Ovary (tissue), 10 donors: ENCODE measurements at regions of chr11 and their contacts with region 1.

Region 1: GRCh38 chr11:117205211-117205818 is 6.1 kb downstream of the TAGLN start:
- DNase-seq: peak in 1 of 5 donors; percentile 60
- H3K4me3 ChIP-seq: peak overlapping the region; percentile 24
- H3K27ac ChIP-seq: peak overlapping the region in 1 of 2 donors; percentile 86
- H3K4me1 ChIP-seq: peaks cover 36% of the 10 kb centered on the region
- H3K27me3 ChIP-seq: no peaks in the 10 kb centered on the region
- CTCF ChIP-seq: no peak
- EP300 ChIP-seq: no peak
- POLR2A ChIP-seq: no peak

Region 2: GRCh38 chr11:117134431-117134830 is 70.9 kb before region 1 on chr11:
- intact Hi-C with region 1: loop called in 3 of 4 experiments (anchors 5 kb)
- DNase-seq: no peak
- H3K4me3 ChIP-seq: no peak overlapping the region
- H3K27ac ChIP-seq: no peak overlapping the region
- H3K4me1 ChIP-seq: no peaks in the 10 kb centered on the region
- H3K27me3 ChIP-seq: no peaks in the 10 kb centered on the region
- CTCF ChIP-seq: no peak
- EP300 ChIP-seq: no peak
- POLR2A ChIP-seq: no peak